Endothelial cell of umbilical vein (primary cell): ENCODE measurements at regions of chr12 and their contacts with region 1.

Region 1: DNA sequence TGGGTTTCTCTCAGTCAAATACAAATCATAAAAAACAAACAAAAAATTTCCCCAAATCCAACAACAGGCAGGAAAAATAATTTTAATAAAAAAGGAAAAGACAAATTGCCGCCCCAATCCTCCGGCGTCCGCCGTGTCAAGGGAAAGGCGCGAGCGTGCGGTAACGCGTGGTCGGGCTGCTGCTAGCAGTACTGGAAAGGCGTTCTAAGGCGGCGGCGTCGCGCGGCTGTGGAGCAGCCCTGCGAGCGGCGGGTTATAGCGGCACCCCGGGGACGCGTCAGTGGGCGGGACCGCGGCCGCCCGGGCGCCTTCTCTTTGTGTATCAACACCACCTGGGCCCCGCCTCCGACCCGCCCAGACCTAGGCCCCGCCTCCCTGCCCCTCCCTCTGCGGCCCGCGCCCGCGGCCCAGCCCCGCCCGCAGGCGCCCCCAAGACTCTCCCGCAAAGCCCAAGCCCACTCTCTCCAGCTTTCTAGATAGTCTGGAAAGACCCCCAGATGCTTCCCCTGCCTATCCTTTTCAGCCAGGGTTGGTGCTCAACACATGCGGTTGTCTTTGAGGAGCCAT is at the start of gene SLC38A2:
- DNase-seq: peak; percentile 93
- H3K4me3 ChIP-seq: peak within 1 kb of the TSS; percentile 90 to 98 (median 91)
- H3K27ac ChIP-seq: peak within 1 kb of the TSS; percentile 96
- H3K4me1 ChIP-seq: peaks cover 29% of the 10 kb centered on the region
- H3K27me3 ChIP-seq: no peaks in the 10 kb centered on the region
- CTCF ChIP-seq: no peak
- POLR2A ChIP-seq: peak; percentile 100
- total RNA-seq, gene SLC38A2: 427 and 459 TPM in 2 replicates

Region 2: GRCh38 chr12:45990468-45991283 is 382.0 kb before region 1 on chr12 and contains the start of gene SCAF11:
- CTCF ChIA-PET with region 1: no interaction called
- POLR2A ChIA-PET with region 1: no interaction called
- dilution Hi-C with region 1: no loop called
- intact Hi-C with region 1: loop called (anchors 2 kb)
- DNase-seq: peak; percentile 100
- H3K4me3 ChIP-seq: peak within 1 kb of the TSS; percentile 56 to 91 (median 86)
- H3K27ac ChIP-seq: peak within 1 kb of the TSS; percentile 79
- H3K4me1 ChIP-seq: peaks cover 16% of the 10 kb centered on the region
- H3K27me3 ChIP-seq: no peaks in the 10 kb centered on the region
- CTCF ChIP-seq: peak; percentile 96 to 99
- POLR2A ChIP-seq: peak; percentile 16
- total RNA-seq, gene SCAF11: 95.0 and 109 TPM in 2 replicates

Region 3: DNA sequence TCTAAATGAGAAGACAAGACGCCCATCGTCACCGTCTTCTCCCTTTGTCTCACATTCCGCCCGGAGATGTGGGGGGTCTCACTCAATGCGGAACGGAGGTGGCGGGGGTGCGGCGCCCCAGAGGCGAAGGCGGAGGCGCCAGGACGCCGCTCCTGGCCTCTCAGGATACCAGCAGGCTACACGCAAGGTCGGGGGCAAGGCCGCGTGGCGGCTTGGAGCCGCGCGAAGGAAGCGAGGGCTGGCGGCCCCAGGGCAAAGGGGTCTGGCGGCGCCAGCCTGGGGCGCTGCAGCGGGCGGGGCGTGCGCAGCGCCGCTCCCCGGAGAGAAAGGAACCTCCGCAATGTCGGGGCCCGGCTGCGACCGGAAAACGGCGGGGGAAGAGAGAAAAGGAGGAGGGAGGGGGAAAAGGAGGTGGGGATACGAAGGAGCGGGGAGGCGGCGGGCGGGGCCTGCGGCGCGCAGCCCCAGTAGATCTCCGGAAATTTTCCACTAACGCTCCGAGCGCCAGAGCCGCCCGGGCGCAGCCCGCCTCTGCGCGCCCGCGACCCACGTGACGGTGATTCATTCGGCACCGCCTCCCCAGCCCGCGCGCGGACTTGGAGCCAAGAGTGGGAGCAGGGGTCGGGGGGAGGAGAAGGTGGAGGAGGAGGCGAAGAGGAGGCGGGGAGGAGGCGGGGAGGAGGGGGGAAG is 10.5 kb after region 1 on chr12:
- CTCF ChIA-PET with region 1: no interaction called
- POLR2A ChIA-PET with region 1: interaction called, 3 read pairs
- dilution Hi-C with region 1: no loop called
- intact Hi-C with region 1: loop called (anchors 1 kb)
- DNase-seq: peak; percentile 97
- H3K4me3 ChIP-seq: peak overlapping the region; percentile 39 to 68 (median 44)
- H3K27ac ChIP-seq: peak overlapping the region; percentile 98
- H3K4me1 ChIP-seq: peaks cover 44% of the 10 kb centered on the region
- H3K27me3 ChIP-seq: no peaks in the 10 kb centered on the region
- CTCF ChIP-seq: peak in 1 of 2 donors; percentile 14
- POLR2A ChIP-seq: peak; percentile 76

Region 4: DNA sequence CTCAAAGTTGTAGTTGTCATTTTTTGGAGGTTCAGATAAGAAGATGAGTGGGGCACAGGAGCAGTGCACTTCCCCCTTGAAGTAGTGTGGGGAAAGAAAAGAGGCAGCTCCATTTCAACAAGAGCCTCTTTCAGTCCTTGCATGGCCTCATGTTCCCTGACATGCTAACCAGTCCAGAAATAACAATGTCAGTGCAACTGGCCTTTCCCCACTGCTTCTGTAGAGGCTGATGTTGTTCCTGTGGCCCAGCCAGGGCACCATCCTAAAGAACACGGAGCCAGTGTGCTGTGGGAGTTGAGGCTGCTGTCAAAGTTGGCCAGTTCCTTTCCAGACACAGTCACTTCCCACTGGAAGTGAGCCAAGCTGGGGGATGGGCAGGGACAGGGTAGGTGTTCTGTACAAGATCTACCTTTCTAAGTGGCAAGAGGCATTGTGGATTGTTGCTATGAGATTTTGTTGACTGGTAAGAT is 77.7 kb after region 1 on chr12:
- CTCF ChIA-PET with region 1: no interaction called
- POLR2A ChIA-PET with region 1: interaction called, 6 read pairs
- dilution Hi-C with region 1: no loop called
- intact Hi-C with region 1: loop called (anchors 1 kb)
- DNase-seq: peak; percentile 73
- H3K4me3 ChIP-seq: no peak overlapping the region
- H3K27ac ChIP-seq: peak overlapping the region; percentile 84
- H3K4me1 ChIP-seq: peaks cover 64% of the 10 kb centered on the region
- H3K27me3 ChIP-seq: no peaks in the 10 kb centered on the region
- CTCF ChIP-seq: no peak
- POLR2A ChIP-seq: no peak

Region 5: DNA sequence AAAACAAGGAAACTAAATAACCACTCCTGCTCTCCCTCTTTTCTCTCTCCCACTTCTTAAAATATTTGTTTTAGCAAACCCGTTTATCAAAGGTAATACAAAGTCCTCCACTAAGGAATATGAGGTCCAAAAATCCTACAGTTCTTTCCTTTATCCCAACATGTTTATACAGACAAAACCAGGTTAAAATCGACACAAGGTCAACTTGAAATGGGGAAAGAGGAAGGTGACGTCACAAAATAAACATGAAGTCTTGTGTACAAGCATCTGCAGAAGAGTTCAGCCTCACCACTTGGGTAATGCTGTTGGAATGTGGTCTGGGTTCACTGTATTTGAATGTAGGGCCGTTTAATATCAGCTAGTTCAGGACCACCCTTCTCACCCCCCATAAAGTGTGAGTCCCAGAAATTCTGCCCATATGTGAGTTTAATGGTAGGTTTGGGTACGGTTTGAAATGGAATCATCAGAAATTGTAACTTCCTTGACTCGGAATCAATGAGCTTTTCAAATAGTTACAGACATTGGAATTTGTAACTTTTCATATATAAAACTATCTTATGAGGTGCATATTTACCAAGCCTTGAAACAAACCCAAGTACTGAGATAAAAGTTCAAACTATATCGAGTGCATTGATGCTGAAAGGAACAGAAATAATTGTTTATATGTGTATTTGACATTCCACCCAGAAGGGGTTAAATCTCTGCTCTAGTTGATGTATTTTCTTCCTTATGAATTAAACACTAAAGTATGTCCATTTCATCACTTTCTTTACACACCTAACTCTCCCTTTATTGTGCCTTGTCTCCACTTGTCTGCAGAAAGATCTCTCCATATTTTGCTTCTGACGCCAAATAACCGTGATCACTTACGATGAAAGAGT is 120.1 kb after region 1 on chr12:
- CTCF ChIA-PET with region 1: no interaction called
- POLR2A ChIA-PET with region 1: interaction called, 5 read pairs
- dilution Hi-C with region 1: no loop called
- intact Hi-C with region 1: loop called (anchors 2 kb)
- DNase-seq: peak; percentile 93
- H3K4me3 ChIP-seq: no peak overlapping the region
- H3K27ac ChIP-seq: peak overlapping the region; percentile 97
- H3K4me1 ChIP-seq: peaks cover 43% of the 10 kb centered on the region
- H3K27me3 ChIP-seq: no peaks in the 10 kb centered on the region
- CTCF ChIP-seq: no peak
- POLR2A ChIP-seq: peak; percentile 63

Region 6: GRCh38 chr12:46562625-46563228 is 190.1 kb after region 1 on chr12:
- CTCF ChIA-PET with region 1: no interaction called
- POLR2A ChIA-PET with region 1: no interaction called
- dilution Hi-C with region 1: no loop called
- intact Hi-C with region 1: loop called (anchors 2 kb)
- DNase-seq: peak; percentile 94
- H3K4me3 ChIP-seq: peak overlapping the region in 1 of 3 experiments; percentile 28
- H3K27ac ChIP-seq: peak overlapping the region; percentile 96
- H3K4me1 ChIP-seq: peaks cover 24% of the 10 kb centered on the region
- H3K27me3 ChIP-seq: no peaks in the 10 kb centered on the region
- CTCF ChIP-seq: no peak
- POLR2A ChIP-seq: peak; percentile 39

Region 7: GRCh38 chr12:47819896-47820630 is 1447.4 kb after region 1 on chr12 and contains the start of gene HDAC7:
- CTCF ChIA-PET with region 1: no interaction called
- POLR2A ChIA-PET with region 1: no interaction called
- dilution Hi-C with region 1: no loop called
- intact Hi-C with region 1: loop called (anchors 5 kb)
- DNase-seq: peak; percentile 90
- H3K4me3 ChIP-seq: peak within 1 kb of the TSS; percentile 79 to 85 (median 84)
- H3K27ac ChIP-seq: peak within 1 kb of the TSS; percentile 93
- H3K4me1 ChIP-seq: peaks cover 50% of the 10 kb centered on the region
- H3K27me3 ChIP-seq: no peaks in the 10 kb centered on the region
- CTCF ChIP-seq: no peak
- POLR2A ChIP-seq: peak; percentile 88
- total RNA-seq, gene HDAC7: 249 and 252 TPM in 2 replicates